ENCODE measurements at regions of chr17 and their contacts with region 1.

Region 1: GRCh38 chr17:41648411-41649195 is 24.2 kb upstream of the KRT17 start:
- DNase-seq: no peak
- H3K4me3 ChIP-seq: peak overlapping the region; percentile 36
- H3K27me3 ChIP-seq: no peaks in the 10 kb centered on the region
- CTCF ChIP-seq: peak; percentile 99

Region 2: GRCh38 chr17:40854159-40854814 is 794.3 kb before region 1 on chr17:
- CTCF ChIA-PET with region 1: interaction called, 88 read pairs
- POLR2A ChIA-PET with region 1: no interaction called
- DNase-seq: peak; percentile 87
- H3K4me3 ChIP-seq: no peak overlapping the region
- H3K27me3 ChIP-seq: no peaks in the 10 kb centered on the region
- CTCF ChIP-seq: no peak

Region 3: DNA sequence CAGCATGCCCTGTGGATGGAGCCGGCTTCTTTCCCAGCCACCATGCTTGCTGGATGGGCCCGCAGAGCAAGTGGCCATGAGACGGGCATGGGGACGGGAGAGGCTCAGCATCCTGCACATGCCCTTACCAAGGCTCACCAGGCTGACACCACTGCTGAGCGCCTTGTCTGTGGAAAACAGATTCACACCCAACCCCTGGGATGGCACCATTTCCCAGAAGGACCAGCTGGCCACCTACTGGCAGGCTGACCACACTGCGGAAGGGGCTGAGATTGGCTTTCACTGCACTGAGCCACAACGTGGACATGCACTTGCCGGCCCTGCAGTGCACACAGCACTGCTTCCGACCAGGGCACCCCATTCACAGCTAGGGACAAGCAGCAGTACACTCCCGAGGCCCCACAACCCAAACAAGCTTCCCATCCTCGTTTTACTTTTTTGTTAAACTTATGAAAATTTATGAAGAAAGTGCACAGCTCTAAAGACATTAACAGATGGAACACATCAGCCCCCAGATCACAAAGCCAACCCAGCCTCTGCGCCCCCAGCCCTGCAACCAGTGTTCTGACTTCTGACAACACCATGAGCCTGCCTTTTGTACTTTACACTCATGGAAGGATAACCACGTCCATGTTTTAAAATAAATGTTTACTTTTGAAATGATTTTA is 319.2 kb before region 1 on chr17:
- CTCF ChIA-PET with region 1: interaction called, 11 read pairs
- POLR2A ChIA-PET with region 1: no interaction called
- DNase-seq: no peak
- H3K4me3 ChIP-seq: no peak overlapping the region
- H3K27me3 ChIP-seq: no peaks in the 10 kb centered on the region
- CTCF ChIP-seq: peak; percentile 92

Region 4: GRCh38 chr17:41452281-41452680 is 196.3 kb before region 1 on chr17:
- CTCF ChIA-PET with region 1: no interaction called
- POLR2A ChIA-PET with region 1: no interaction called
- DNase-seq: no peak
- H3K4me3 ChIP-seq: no peak overlapping the region
- H3K27me3 ChIP-seq: no peaks in the 10 kb centered on the region
- CTCF ChIP-seq: no peak

Region 5: GRCh38 chr17:41579484-41580243 is 68.9 kb before region 1 on chr17:
- CTCF ChIA-PET with region 1: interaction called, 44 read pairs
- POLR2A ChIA-PET with region 1: no interaction called
- DNase-seq: peak; percentile 8
- H3K4me3 ChIP-seq: no peak overlapping the region
- H3K27me3 ChIP-seq: peaks cover 4% of the 10 kb centered on the region
- CTCF ChIP-seq: peak; percentile 87

Region 6: DNA sequence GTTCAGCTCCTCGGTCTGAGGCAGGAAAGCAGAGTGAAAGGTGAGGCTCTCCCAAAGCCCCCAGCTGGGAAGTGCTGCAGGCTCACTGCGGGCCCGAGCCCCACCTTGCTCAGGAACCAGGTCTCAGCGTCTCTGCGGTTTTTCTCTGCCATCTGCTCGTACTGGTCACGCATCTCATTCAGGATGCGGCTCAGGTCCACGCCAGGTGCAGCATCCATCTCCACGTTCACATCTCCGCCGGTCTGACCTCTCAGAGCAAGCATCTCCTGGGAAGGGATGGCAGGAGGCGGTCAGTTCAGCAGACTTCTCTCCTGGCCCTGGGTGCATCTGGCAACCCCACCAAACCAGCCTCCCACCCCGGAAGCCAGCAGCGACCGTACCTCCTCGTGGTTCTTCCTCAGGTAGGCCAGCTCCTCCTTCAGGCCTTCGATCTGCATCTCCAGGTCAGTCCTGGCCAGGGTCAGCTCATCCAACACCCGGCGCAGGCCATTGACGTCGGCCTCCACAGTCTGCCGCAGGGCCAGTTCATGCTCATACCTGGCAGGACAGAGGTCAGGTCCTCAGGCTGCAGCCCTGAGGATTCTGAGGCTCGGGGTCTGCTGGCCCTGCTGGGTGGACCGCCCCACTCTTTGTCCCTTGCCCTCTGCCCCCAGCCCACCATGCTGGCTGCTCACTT is 37.5 kb before region 1 on chr17:
- CTCF ChIA-PET with region 1: interaction called, 11 read pairs
- POLR2A ChIA-PET with region 1: no interaction called
- DNase-seq: no peak
- H3K4me3 ChIP-seq: no peak overlapping the region
- H3K27me3 ChIP-seq: peaks cover 8% of the 10 kb centered on the region
- CTCF ChIP-seq: no peak

Region 7: DNA sequence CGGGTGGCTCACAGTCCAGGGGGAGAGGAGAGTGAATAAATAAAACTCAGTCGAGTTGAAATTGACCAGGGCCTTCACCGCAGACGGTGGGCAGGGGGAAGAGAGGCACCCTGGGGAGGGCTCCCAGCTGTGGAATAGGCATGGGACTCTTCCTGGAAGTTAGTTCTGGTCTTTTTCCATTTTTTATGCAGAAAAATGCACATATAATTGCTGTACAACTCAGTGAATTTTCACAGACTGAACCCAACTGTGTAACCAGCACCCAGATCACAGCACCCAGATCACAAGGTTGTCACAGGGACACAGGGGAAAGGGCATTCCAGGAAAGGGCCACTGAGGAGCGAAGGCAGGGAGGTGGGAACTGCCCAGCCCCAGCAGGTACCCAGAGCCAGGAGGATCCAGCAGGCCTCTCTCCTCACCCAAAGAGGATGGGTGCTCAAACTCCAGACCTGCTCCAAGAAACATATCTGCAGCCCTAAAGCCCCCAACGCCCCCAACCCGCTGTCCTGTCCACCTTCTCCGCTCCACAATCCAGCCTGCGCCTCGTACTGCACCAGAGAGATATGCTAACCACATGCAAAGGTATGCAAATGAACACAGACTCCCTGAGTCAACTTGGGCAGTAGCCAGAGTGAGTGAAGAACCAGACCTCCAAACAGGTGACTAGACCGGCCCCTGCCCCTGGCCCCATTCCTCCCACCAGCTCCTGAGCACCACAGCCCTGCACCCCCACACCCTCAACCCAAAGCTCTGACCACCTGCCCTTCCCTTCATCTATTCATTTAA is 11.0 kb after region 1 on chr17:
- CTCF ChIA-PET with region 1: interaction called, 271 read pairs
- POLR2A ChIA-PET with region 1: no interaction called
- DNase-seq: no peak
- H3K4me3 ChIP-seq: no peak overlapping the region
- H3K27me3 ChIP-seq: no peaks in the 10 kb centered on the region
- CTCF ChIP-seq: no peak

Region 8: DNA sequence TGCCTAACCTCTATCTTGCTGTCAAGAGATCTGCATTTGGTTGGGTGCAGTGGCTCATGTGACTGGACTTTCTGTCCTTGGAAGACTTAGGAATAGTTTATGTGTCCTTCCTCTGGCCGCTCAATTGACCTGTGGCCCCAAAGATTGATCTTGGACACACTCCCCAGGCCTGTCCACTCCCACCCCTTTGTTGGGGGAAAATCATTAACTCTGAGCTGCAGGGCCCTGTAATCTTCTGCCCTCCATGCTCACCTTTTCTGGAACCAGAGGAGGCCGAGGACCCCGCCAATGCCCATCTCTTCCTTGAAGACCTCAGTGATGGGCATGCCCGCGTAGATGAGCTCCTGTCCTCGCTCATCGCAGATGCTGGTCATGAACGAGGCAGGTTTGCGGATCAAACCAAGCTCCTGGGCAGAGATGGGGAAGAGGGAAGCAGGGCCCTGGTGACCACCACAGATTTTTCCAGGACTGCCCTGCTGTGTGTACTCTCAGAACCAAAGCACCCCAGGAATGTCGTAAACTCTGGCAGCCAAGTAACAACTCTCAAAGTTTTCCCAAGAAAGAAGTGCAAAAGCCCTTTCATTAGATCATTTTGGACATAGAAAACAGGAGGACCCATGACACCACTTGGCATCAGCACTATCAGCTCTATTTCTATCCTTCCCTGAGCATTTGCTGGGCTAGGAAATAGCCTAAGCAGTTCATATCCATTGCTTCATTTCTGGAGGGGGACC is 225.1 kb after region 1 on chr17:
- CTCF ChIA-PET with region 1: no interaction called
- POLR2A ChIA-PET with region 1: no interaction called
- DNase-seq: no peak
- H3K4me3 ChIP-seq: no peak overlapping the region
- H3K27me3 ChIP-seq: no peaks in the 10 kb centered on the region
- CTCF ChIP-seq: no peak